Activated CD4-positive, alpha-beta T cell treated with anti-CD3 and anti-CD28 coated beads for 36 hours (primary cell): ENCODE measurements at regions of chr1 and their contacts with region 1.

Region 1: DNA sequence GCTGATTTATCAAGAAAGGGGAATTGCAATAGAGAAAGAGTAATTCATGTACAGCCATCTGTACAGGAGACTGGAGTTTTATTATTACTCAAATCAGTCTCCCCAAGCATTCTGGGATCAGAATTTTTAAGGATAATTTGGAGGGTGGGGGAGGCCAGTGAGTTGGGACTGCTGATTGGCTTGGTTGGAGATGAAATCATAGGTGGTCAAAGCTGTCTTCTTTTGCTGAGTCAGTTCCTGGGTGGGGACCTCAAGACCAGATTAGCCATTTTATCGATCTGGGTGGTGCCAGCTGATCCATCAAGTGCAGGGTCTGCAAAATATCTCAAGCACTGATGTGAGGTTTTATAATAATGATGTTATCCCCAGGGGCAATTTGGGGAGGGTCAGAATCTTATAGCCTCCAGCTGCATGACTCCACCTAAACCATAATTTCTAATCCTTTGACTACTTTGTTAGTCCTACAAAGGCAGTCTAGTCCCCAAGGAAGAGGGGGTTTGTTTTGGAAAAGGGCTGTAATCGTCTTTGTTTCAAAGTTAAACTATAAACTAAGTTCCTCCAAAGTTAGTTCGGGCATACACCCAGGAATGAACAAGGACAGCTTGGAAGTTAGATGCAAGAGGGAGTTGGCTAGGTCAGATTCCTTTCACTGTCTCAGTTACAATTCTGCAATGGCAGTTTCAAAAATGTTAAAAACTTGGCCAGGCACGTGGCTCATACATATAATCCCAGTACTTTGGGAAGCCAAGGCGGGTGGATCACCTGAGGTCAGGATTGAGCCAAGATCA is 16.9 kb upstream of the RAB3B start:
- DNase-seq: no peak
- ATAC-seq: no peak
- H3K4me3 Mint-ChIP-seq: no peak overlapping the region
- H3K27ac Mint-ChIP-seq: no peak overlapping the region
- H3K4me1 Mint-ChIP-seq: no peaks in the 10 kb centered on the region
- H3K27me3 Mint-ChIP-seq: peaks cover 18% of the 10 kb centered on the region

Region 2: DNA sequence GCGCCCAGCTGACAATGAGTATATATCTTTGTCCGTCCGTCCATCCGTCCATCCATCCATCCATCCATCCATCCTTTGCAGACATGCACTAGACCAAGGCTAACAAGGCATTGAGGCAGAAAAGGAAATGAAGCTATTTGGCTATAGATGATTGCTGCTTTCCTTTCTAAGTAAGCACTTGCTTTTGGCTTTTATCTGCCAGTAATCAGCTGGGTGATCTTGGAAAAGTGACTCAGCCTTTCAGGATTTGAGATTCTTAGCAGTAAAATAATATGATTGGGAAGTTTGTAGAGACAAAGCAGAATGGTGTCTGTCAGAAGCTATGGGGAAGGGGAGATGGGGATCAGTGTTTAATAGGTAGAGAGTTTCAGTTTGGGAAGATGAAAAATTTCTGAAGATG is 157.2 kb after region 1 on chr1:
- CTCF ChIA-PET with region 1: no interaction called
- POLR2A ChIA-PET with region 1: no interaction called
- intact Hi-C with region 1: loop called in 1 of 2 experiments (anchors 10 kb)
- DNase-seq: no peak
- ATAC-seq: no peak
- H3K4me3 Mint-ChIP-seq: no peak overlapping the region
- H3K27ac Mint-ChIP-seq: no peak overlapping the region
- H3K4me1 Mint-ChIP-seq: no peaks in the 10 kb centered on the region
- H3K27me3 Mint-ChIP-seq: no peaks in the 10 kb centered on the region

Region 3: GRCh38 chr1:52253401-52253800 is 246.0 kb after region 1 on chr1:
- CTCF ChIA-PET with region 1: no interaction called
- POLR2A ChIA-PET with region 1: no interaction called
- intact Hi-C with region 1: no loop called
- DNase-seq: no peak
- ATAC-seq: no peak
- H3K4me3 Mint-ChIP-seq: no peak overlapping the region
- H3K27ac Mint-ChIP-seq: no peak overlapping the region
- H3K4me1 Mint-ChIP-seq: no peaks in the 10 kb centered on the region
- H3K27me3 Mint-ChIP-seq: no peaks in the 10 kb centered on the region